ENCODE measurements at regions of chr1 and their contacts with region 1.

Region 1: GRCh38 chr1:40059338-40059959 is 18.9 kb downstream of the CAP1 start:
- DNase-seq: no peak
- ATAC-seq: peak in 7 of 8 donors; percentile 50 to 87 (median 81)
- H3K4me3 ChIP-seq: peak overlapping the region in 1 of 10 donors; percentile 22
- H3K27ac ChIP-seq: peak overlapping the region; percentile 34 to 78 (median 56)
- H3K4me1 ChIP-seq: peaks cover 17 to 97% (median 72%) of the 10 kb centered on the region in 9 donors
- H3K27me3 ChIP-seq: no peaks in the 10 kb centered on the region
- CTCF ChIP-seq: no peak

Region 2: GRCh38 chr1:40014812-40015594 is 44.4 kb before region 1 on chr1:
- intact Hi-C with region 1: no loop called
- DNase-seq: no peak
- ATAC-seq: no peak
- H3K4me3 ChIP-seq: no peak overlapping the region
- H3K27ac ChIP-seq: no peak overlapping the region
- H3K4me1 ChIP-seq: peaks cover 0 to 12% (median 0%) of the 10 kb centered on the region in 9 donors
- H3K27me3 ChIP-seq: peaks cover 0 to 10% (median 0%) of the 10 kb centered on the region in 7 donors
- CTCF ChIP-seq: no peak

Region 3: GRCh38 chr1:40040511-40041465 is 18.7 kb before region 1 on chr1 and contains the start of gene CAP1:
- intact Hi-C with region 1: loop called in 1 of 10 experiments (anchors 2 kb)
- DNase-seq: peak; percentile 99 to 100
- ATAC-seq: peak; percentile 94 to 97 (median 96)
- H3K4me3 ChIP-seq: peak within 1 kb of the TSS; percentile 64 to 99 (median 91)
- H3K27ac ChIP-seq: peak within 1 kb of the TSS; percentile 97 to 100 (median 100)
- H3K4me1 ChIP-seq: peaks cover 6 to 85% (median 75%) of the 10 kb centered on the region in 9 donors
- H3K27me3 ChIP-seq: no peaks in the 10 kb centered on the region
- CTCF ChIP-seq: no peak
- total RNA-seq, gene CAP1: 46.4 to 157 (median 55.8) TPM